ENCODE measurements at regions of chr22 and their contacts with region 1.

Region 1: DNA sequence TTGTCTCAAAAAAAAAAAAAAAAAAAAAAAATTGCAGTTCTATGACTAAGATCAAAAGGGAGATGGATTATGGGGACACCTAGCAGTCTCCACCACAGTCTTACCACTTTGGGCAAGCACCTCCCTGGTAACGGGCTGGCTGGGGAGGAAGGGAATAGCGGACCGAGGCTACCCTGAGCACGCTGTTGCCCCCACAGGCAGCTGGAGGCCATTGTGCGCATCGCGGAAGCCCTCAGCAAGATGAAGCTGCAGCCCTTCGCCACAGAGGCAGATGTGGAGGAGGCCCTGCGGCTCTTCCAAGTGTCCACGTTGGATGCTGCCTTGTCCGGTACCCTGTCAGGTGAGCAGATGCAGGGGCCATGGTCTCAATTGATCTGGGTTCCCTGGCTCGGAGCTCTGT is 21.2 kb downstream of the MCM5 start:
- DNase-seq: no peak
- H3K4me3 ChIP-seq: no peak overlapping the region
- H3K4me3 Mint-ChIP-seq: no peak overlapping the region
- H3K27ac Mint-ChIP-seq: no peak overlapping the region
- H3K4me1 ChIP-seq: no peaks in the 10 kb centered on the region
- H3K4me1 Mint-ChIP-seq: no peaks in the 10 kb centered on the region
- H3K27me3 ChIP-seq: no peaks in the 10 kb centered on the region
- H3K27me3 Mint-ChIP-seq: no peaks in the 10 kb centered on the region
- CTCF ChIP-seq: no peak

Region 2: DNA sequence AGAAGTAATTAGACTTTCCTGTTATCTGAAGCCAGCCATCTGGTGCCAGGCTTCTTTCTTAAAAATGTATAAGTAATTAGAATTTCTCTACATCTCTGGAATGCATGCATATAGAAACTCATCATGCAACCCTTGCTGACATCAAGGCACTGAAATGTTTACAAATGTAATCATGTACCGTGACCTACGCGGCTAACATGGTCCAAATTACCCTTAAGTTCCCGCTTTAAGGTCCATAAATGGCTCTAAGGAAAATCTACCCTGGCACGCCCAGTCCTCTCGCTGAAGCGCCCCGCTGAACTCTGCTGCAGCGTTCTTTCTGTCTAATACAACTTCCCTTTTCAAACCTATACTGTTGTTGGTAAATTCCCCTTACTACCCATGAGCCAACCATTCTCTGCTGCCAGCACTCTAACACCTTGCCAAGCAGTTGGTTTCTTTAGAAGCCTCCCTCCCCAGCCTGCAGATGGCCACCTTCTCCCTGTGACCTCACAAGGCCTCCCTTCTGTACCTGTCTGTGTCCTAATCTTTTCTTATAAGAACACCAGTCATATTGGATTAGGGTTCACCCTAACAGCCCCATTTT is 53.7 kb before region 1 on chr22:
- CTCF ChIA-PET with region 1: interaction called, 12 read pairs
- POLR2A ChIA-PET with region 1: no interaction called
- intact Hi-C with region 1: no loop called
- DNase-seq: no peak
- H3K4me3 ChIP-seq: no peak overlapping the region
- H3K4me3 Mint-ChIP-seq: no peak overlapping the region
- H3K27ac Mint-ChIP-seq: peak overlapping the region; percentile 64
- H3K4me1 ChIP-seq: peaks cover 33% of the 10 kb centered on the region
- H3K4me1 Mint-ChIP-seq: peaks cover 29% of the 10 kb centered on the region
- H3K27me3 ChIP-seq: no peaks in the 10 kb centered on the region
- H3K27me3 Mint-ChIP-seq: no peaks in the 10 kb centered on the region
- CTCF ChIP-seq: no peak

Region 3: GRCh38 chr22:35392357-35392756 is 28.8 kb before region 1 on chr22:
- CTCF ChIA-PET with region 1: no interaction called
- POLR2A ChIA-PET with region 1: no interaction called
- intact Hi-C with region 1: no loop called
- DNase-seq: no peak
- H3K4me3 ChIP-seq: no peak overlapping the region
- H3K4me3 Mint-ChIP-seq: no peak overlapping the region
- H3K27ac Mint-ChIP-seq: no peak overlapping the region
- H3K4me1 ChIP-seq: no peaks in the 10 kb centered on the region
- H3K4me1 Mint-ChIP-seq: peaks cover 10% of the 10 kb centered on the region
- H3K27me3 ChIP-seq: no peaks in the 10 kb centered on the region
- H3K27me3 Mint-ChIP-seq: no peaks in the 10 kb centered on the region
- CTCF ChIP-seq: no peak

Region 4: GRCh38 chr22:35449829-35450689 is 28.9 kb after region 1 on chr22:
- CTCF ChIA-PET with region 1: no interaction called
- POLR2A ChIA-PET with region 1: no interaction called
- intact Hi-C with region 1: no loop called
- DNase-seq: no peak
- H3K4me3 ChIP-seq: no peak overlapping the region
- H3K4me3 Mint-ChIP-seq: no peak overlapping the region
- H3K27ac Mint-ChIP-seq: no peak overlapping the region
- H3K4me1 ChIP-seq: 0 out of 2 replicates have a peak, but pooled peaks cover 3% of the 10 kb centered on the region
- H3K4me1 Mint-ChIP-seq: no peaks in the 10 kb centered on the region
- H3K27me3 ChIP-seq: no peaks in the 10 kb centered on the region
- H3K27me3 Mint-ChIP-seq: peaks cover 5% of the 10 kb centered on the region
- CTCF ChIP-seq: no peak